ENCODE measurements at regions of chrX and their contacts with region 1.

Region 1: DNA sequence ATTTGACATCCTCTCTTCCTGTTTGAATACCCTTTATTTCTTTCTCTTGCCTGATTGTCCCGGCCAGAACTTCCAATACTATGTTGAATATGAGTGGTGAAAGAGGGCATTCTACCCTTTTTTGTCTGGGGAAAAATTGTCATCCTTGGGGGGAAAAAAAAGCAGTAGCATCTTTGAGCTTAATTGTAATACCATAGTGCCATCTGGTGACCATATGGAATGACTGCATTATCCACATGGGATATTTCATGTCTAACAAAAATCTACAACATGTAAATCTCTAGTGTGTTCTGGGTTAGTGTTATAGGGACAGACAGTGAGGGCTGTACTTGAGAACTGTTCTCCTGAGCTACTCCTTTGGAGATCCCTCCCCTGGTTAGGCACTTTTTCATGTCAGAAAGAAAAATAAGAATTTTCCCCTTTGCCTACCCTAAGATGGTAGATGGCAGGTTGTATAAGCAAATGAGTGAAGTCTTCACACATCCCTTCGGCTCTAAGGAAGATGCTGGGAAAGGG is 26.0 kb downstream of the CAPN6 start:
- H3K4me3 ChIP-seq: no peak overlapping the region
- H3K27ac ChIP-seq: no peak overlapping the region
- H3K4me1 ChIP-seq: no peaks in the 10 kb centered on the region
- CTCF ChIP-seq: peak; percentile 44; the same call in 1 of the 2 replicates

Region 2: DNA sequence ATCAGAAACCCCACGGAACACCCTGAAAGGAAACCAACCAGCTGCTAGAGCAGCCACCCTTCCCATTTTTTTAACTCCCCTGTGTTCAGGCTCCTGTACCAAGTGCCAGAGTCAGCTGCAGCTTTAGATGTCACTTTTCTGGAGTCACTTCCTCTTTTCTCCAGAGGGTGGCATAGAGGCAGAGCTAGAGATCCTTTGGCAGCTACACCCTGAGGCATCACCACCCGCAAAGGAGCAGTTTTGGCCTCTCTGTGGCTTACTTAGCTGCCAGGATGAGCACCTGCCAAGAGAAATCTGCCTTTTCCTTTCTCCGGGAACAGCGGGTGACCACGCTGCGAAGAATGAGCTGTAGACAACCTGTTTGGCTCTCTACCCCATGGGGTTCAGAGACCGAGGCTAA is 390.7 kb before region 1 on chrX:
- CTCF ChIA-PET with region 1: interaction called, 24 read pairs
- POLR2A ChIA-PET with region 1: no interaction called
- H3K4me3 ChIP-seq: no peak overlapping the region
- H3K27ac ChIP-seq: no peak overlapping the region
- H3K4me1 ChIP-seq: no peaks in the 10 kb centered on the region
- CTCF ChIP-seq: no peak

Region 3: GRCh38 chrX:111168314-111168713 is 76.0 kb before region 1 on chrX:
- CTCF ChIA-PET with region 1: interaction called, 41 read pairs
- POLR2A ChIA-PET with region 1: no interaction called
- H3K4me3 ChIP-seq: no peak overlapping the region
- H3K27ac ChIP-seq: no peak overlapping the region
- H3K4me1 ChIP-seq: no peaks in the 10 kb centered on the region
- CTCF ChIP-seq: no peak

Region 4: GRCh38 chrX:111259559-111259958 is 15.3 kb after region 1 on chrX:
- CTCF ChIA-PET with region 1: interaction called, 11 read pairs
- POLR2A ChIA-PET with region 1: no interaction called
- H3K4me3 ChIP-seq: no peak overlapping the region
- H3K27ac ChIP-seq: no peak overlapping the region
- H3K4me1 ChIP-seq: no peaks in the 10 kb centered on the region
- CTCF ChIP-seq: no peak

Measured in HEK293 (cell line).